ENCODE measurements at regions of chr7 and their contacts with region 1.

Region 1: DNA sequence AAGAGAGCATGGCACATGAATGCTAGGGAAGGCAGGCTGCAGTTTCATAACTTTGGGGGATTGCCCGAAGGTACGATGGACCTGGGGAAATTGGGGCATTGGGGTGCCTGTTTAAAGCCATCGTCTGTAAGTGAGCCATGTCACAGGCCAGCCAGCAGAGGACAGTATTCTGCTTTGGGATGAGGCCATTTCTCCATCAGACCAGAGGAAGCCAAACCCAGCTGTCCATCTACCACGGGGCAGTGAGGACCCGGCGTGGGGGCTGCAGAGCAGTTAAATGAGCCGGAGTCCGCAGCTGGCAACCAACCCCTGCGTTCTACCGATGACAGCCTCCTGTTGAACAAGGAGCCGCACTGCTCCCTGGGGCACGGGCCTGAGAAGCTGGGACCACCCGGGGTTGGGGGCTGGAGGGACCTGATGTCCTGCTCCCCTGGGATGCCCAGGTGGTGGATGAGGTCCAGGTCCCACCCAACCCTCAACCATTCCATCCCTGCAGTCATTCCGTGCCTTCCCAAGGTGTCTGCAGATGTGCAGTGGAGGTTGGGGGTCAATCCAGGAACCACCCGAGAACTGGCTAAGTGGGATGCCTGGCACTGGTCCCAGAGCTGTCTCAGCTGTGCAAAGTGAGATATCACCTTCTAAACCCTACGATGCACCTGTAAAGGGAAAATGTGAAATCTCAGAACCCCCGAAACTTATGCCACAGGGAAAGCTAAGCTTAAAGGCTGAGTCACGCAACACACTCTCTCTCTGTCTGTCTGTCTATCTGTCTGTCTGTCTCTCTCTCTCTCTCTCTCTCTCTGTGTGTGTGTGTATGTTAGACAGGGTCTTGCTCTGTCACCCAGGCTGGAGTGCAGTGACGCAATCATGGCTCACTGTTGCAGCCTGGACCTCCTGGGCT is 12.1 kb upstream of the RHBDD2 start:
- DNase-seq: peak; percentile 41 to 43
- H3K4me3 ChIP-seq: no peak overlapping the region
- H3K27ac ChIP-seq: no peak overlapping the region
- H3K4me1 ChIP-seq: peaks cover 0 to 6% of the 10 kb centered on the region in 2 donors
- H3K27me3 ChIP-seq: no peaks in the 10 kb centered on the region
- CTCF ChIP-seq: peak; percentile 77 to 90 (median 84)
- POLR2A ChIP-seq: no peak

Region 2: DNA sequence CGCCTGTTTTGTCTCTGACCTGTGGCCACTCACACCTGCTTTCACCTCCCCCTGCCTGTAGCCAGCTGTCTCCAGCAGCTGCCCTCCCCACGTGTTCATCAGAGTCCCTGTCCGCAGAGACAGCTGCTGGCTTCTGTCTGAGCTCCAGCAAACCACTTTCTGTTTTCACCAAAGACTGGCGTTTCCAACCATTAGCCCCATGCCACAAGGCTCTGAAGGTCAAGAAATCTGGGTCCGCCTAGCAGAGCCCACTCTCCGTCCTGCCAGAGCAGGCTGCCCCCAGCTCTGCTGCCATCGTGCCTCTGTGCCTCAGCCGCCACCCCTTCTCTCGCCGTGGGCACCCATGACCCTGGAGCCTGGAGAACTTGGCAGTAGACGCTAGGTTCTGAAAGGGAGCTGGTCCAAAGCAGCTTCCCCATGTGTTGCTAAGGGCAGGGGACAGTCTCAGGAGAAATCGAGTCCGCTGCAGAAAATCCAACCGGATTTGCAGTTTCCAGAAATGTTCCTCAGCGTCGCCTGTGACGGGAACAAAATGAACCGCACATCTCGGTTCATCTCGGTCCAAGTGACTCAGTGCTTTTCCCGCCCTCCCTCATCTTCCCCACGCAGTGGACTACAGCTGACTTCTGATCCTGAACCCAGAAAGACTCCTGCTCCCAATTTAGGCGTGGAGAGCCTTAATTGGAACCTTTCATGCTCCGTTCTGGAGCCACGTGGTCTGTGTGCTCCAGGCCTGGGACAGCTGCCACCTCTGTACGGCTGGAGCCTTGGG is 99.6 kb after region 1 on chr7:
- intact Hi-C with region 1: no loop called
- DNase-seq: peak; percentile 73 to 78
- H3K4me3 ChIP-seq: peak overlapping the region in 1 of 2 donors; percentile 23
- H3K27ac ChIP-seq: peak overlapping the region; percentile 76 to 79
- H3K4me1 ChIP-seq: peaks cover 0 to 27% of the 10 kb centered on the region in 2 donors
- H3K27me3 ChIP-seq: no peaks in the 10 kb centered on the region
- CTCF ChIP-seq: no peak
- POLR2A ChIP-seq: no peak

Region 3: GRCh38 chr7:76020031-76020714 is 153.4 kb after region 1 on chr7:
- intact Hi-C with region 1: loop called (anchors 10 kb)
- DNase-seq: peak; percentile 65 to 72
- H3K4me3 ChIP-seq: no peak overlapping the region
- H3K27ac ChIP-seq: no peak overlapping the region
- H3K4me1 ChIP-seq: no peaks in the 10 kb centered on the region
- H3K27me3 ChIP-seq: no peaks in the 10 kb centered on the region
- CTCF ChIP-seq: peak; percentile 63 to 89 (median 75)
- POLR2A ChIP-seq: no peak